ENCODE measurements at regions of chr2 and their contacts with region 1.

Region 1: DNA sequence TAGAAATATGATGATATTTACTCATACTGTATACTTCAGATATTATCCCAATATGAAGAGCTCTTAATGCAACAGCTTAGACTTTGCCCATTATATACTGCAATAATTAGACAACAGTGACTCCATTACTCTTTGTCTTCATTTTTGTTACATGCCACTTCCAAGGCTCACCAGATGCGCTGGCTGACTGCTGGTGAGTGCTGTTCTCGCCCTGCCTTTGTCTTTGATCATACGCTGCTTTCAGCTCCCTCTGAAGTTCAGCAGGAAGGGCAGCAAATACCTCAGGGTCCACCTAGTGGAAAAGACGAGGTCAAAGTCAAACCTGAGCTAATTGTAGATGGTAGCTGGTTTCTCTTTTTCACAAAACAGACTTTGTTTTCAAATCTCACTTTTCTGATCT is 66.3 kb downstream of the EIF5B start:
- DNase-seq: peak in 1 of 2 experiments; percentile 42
- H3K4me3 ChIP-seq: no peak overlapping the region
- H3K4me3 Mint-ChIP-seq: no peak overlapping the region
- H3K27ac Mint-ChIP-seq: peak overlapping the region; percentile 59
- H3K4me1 ChIP-seq: peaks cover 10% of the 10 kb centered on the region; the same call in 1 of the 2 replicates
- H3K4me1 Mint-ChIP-seq: peaks cover 16% of the 10 kb centered on the region
- H3K27me3 ChIP-seq: no peaks in the 10 kb centered on the region
- H3K27me3 Mint-ChIP-seq: no peaks in the 10 kb centered on the region
- CTCF ChIP-seq: peak; percentile 14 to 48

Region 2: DNA sequence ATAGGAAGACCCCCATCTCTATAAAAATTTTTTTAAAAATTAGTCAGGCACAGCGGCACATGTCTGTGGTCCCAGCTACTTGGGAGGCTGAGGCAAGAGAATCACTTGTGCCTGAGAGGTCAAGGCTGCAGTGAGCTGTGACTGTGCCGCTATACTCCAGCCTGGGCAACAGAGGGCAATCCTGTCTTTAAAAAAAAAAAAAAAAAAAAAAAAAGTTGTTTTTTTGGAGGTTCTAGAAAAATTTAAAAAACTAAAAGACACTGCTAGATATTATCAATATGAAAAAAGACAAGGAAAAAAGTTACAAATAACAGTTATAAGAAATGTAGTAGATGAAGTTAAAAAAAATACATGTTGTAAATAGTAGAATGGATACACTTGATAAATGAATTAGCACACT is 318.1 kb before region 1 on chr2:
- CTCF ChIA-PET with region 1: no interaction called
- POLR2A ChIA-PET with region 1: no interaction called
- intact Hi-C with region 1: loop called (anchors 10 kb)
- DNase-seq: peak in 1 of 2 experiments; percentile 14
- H3K4me3 ChIP-seq: no peak overlapping the region
- H3K4me3 Mint-ChIP-seq: no peak overlapping the region
- H3K27ac Mint-ChIP-seq: no peak overlapping the region
- H3K4me1 ChIP-seq: no peaks in the 10 kb centered on the region
- H3K4me1 Mint-ChIP-seq: no peaks in the 10 kb centered on the region
- H3K27me3 ChIP-seq: no peaks in the 10 kb centered on the region
- H3K27me3 Mint-ChIP-seq: peaks cover 6% of the 10 kb centered on the region
- CTCF ChIP-seq: peak; percentile 35 to 60

Region 3: DNA sequence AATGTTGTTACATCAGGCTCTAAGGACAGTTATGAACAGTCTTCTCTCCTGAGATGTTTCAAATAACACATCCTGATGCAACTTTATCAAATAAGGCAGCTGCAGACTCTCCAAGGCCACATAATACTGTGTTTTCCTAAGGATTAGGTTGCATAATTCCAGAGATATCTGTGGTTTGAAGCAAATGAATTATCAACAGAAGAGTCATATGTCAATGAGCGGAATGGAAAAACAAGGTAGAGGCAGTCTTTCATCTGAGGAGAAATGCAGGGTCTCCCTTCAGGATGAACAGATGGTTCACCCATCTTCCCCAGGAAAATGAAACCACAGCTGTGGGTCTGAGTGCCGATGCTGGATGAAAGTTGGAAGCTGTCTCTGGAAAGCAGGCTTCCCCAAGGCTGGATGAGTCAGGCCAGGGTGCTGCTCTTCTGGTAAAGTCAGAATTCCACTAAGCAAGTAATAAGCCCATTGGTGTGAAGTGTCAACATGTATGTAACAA is 124.7 kb before region 1 on chr2:
- CTCF ChIA-PET with region 1: no interaction called
- POLR2A ChIA-PET with region 1: no interaction called
- intact Hi-C with region 1: no loop called
- DNase-seq: peak; percentile 51 to 56
- H3K4me3 ChIP-seq: no peak overlapping the region
- H3K4me3 Mint-ChIP-seq: peak overlapping the region; percentile 42
- H3K27ac Mint-ChIP-seq: peak overlapping the region; percentile 63
- H3K4me1 ChIP-seq: peaks cover 12% of the 10 kb centered on the region
- H3K4me1 Mint-ChIP-seq: peaks cover 7% of the 10 kb centered on the region
- H3K27me3 ChIP-seq: no peaks in the 10 kb centered on the region
- H3K27me3 Mint-ChIP-seq: no peaks in the 10 kb centered on the region
- CTCF ChIP-seq: no peak

Region 4: GRCh38 chr2:99489761-99490622 is 86.5 kb after region 1 on chr2 and contains the start of gene REV1:
- CTCF ChIA-PET with region 1: interaction called, 3 read pairs
- POLR2A ChIA-PET with region 1: no interaction called
- intact Hi-C with region 1: loop called (anchors 2 kb)
- DNase-seq: peak; percentile 94 to 97
- H3K4me3 ChIP-seq: peak within 1 kb of the TSS; percentile 87
- H3K4me3 Mint-ChIP-seq: peak within 1 kb of the TSS; percentile 100
- H3K27ac Mint-ChIP-seq: peak within 1 kb of the TSS; percentile 99
- H3K4me1 ChIP-seq: peaks cover 5% of the 10 kb centered on the region; the same call in 1 of the 2 replicates
- H3K4me1 Mint-ChIP-seq: peaks cover 7% of the 10 kb centered on the region
- H3K27me3 ChIP-seq: no peaks in the 10 kb centered on the region
- H3K27me3 Mint-ChIP-seq: no peaks in the 10 kb centered on the region
- CTCF ChIP-seq: peak; percentile 65 to 83
- total RNA-seq, gene REV1: 39.6 and 41.1 TPM in 2 replicates